ENCODE measurements at regions of chr15 and their contacts with region 1.

Region 1: GRCh38 chr15:92917606-92918407 is 17.7 kb downstream of the CHD2 start:
- DNase-seq: peak; percentile 82 to 95 (median 90)
- ATAC-seq: peak; percentile 26
- H3K4me3 ChIP-seq: no peak overlapping the region
- H3K4me3 Mint-ChIP-seq: peak overlapping the region; percentile 67
- H3K27ac ChIP-seq: peak overlapping the region; percentile 63 to 75
- H3K27ac Mint-ChIP-seq: peak overlapping the region; percentile 99
- H3K4me1 ChIP-seq: peaks cover 77% of the 10 kb centered on the region
- H3K4me1 Mint-ChIP-seq: peaks cover 84% of the 10 kb centered on the region
- H3K27me3 ChIP-seq: no peaks in the 10 kb centered on the region
- H3K27me3 Mint-ChIP-seq: no peaks in the 10 kb centered on the region
- CTCF ChIP-seq: peak; percentile 94

Region 2: DNA sequence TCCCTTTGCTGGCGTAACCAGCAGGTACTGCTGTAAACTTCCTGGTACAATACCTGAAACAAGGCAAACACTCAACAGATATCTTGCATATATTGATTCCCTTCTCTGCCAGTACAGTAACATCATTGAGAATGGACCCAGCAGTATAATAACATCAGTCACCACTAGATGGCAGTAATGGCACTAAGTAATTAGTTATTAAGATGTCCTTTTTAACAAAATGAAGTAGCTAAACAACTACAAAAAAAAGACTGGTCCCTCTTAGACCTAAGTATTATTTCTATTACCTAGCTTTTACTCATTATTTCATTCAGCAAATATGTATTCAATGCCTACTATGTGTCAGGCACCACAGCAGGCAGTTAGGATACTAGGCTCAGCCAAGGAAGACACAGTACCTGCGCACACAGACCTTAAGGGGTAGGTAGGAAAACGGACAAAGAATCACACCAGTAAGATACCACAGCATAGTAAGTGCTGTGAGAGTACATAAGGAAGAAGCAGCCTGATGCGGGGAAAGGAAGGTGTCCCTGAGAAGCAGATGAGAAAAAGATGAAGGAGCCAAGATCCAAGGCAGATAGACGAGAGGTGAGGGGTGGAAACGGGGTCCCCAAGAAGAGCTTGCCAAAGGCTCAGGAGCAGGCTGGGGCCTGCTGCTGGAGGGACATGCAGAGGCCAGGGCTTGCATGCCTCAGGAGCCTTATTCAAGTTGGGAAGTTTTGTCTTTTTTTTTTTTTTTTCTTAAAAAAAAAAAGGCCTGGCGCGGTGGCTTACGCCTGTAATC is 120.4 kb before region 1 on chr15:
- CTCF ChIA-PET with region 1: interaction called, 21 read pairs
- POLR2A ChIA-PET with region 1: interaction called, 16 read pairs
- intact Hi-C with region 1: loop called (anchors 1 kb)
- DNase-seq: peak in 5 of 14 experiments; percentile 26 to 89 (median 83)
- ATAC-seq: peak; percentile 95
- H3K4me3 ChIP-seq: no peak overlapping the region
- H3K4me3 Mint-ChIP-seq: no peak overlapping the region
- H3K27ac ChIP-seq: no peak overlapping the region
- H3K27ac Mint-ChIP-seq: peak overlapping the region; percentile 31
- H3K4me1 ChIP-seq: peaks cover 10% of the 10 kb centered on the region
- H3K4me1 Mint-ChIP-seq: peaks cover 10% of the 10 kb centered on the region
- H3K27me3 ChIP-seq: no peaks in the 10 kb centered on the region
- H3K27me3 Mint-ChIP-seq: no peaks in the 10 kb centered on the region
- CTCF ChIP-seq: peak; percentile 73

Region 3: GRCh38 chr15:92831655-92832328 is 86.0 kb before region 1 on chr15:
- CTCF ChIA-PET with region 1: interaction called, 7 read pairs
- POLR2A ChIA-PET with region 1: interaction called, 14 read pairs
- intact Hi-C with region 1: no loop called
- DNase-seq: peak; percentile 73 to 95 (median 89)
- ATAC-seq: peak; percentile 91
- H3K4me3 ChIP-seq: peak overlapping the region; percentile 33
- H3K4me3 Mint-ChIP-seq: peak overlapping the region; percentile 73
- H3K27ac ChIP-seq: peak overlapping the region; percentile 85 to 96
- H3K27ac Mint-ChIP-seq: peak overlapping the region; percentile 98
- H3K4me1 ChIP-seq: peaks cover 46% of the 10 kb centered on the region
- H3K4me1 Mint-ChIP-seq: peaks cover 57% of the 10 kb centered on the region
- H3K27me3 ChIP-seq: no peaks in the 10 kb centered on the region
- H3K27me3 Mint-ChIP-seq: no peaks in the 10 kb centered on the region
- CTCF ChIP-seq: no peak

Region 4: GRCh38 chr15:92891533-92892200 is 26.1 kb before region 1 on chr15:
- CTCF ChIA-PET with region 1: interaction called, 6 read pairs
- POLR2A ChIA-PET with region 1: interaction called, 17 read pairs
- intact Hi-C with region 1: loop called in 1 of 2 experiments (anchors 1 kb)
- DNase-seq: peak in 1 of 14 experiments; percentile 4
- ATAC-seq: no peak
- H3K4me3 ChIP-seq: no peak overlapping the region
- H3K4me3 Mint-ChIP-seq: peak overlapping the region; percentile 70
- H3K27ac ChIP-seq: peak overlapping the region in 1 of 2 donors; percentile 20
- H3K27ac Mint-ChIP-seq: peak overlapping the region; percentile 99
- H3K4me1 ChIP-seq: peaks cover 35% of the 10 kb centered on the region
- H3K4me1 Mint-ChIP-seq: peaks cover 93% of the 10 kb centered on the region
- H3K27me3 ChIP-seq: no peaks in the 10 kb centered on the region
- H3K27me3 Mint-ChIP-seq: no peaks in the 10 kb centered on the region
- CTCF ChIP-seq: no peak

Region 5: DNA sequence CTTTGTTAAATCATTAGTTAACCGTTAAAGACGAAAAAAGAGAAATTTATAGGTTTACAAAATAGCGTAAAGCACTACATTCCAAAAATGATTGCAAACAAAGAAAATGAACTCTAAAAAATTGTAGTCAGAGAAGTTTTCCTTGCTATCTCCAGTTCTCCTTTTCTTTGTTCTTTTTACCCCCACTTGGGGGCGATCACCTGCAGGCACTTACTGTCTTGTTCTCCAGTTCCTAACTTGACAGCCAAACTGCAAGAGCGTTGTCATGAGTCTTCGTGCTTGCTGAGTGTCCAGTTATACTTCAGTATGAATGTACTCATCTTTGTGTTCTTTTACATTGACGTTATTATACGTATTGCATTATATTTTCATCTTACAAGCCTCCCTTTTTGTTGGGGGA is 36.8 kb after region 1 on chr15:
- CTCF ChIA-PET with region 1: interaction called, 3 read pairs
- POLR2A ChIA-PET with region 1: no interaction called
- intact Hi-C with region 1: loop called (anchors 5 kb)
- DNase-seq: peak in 3 of 14 experiments; percentile 15 to 37 (median 32)
- ATAC-seq: no peak
- H3K4me3 ChIP-seq: no peak overlapping the region
- H3K4me3 Mint-ChIP-seq: no peak overlapping the region
- H3K27ac ChIP-seq: no peak overlapping the region
- H3K27ac Mint-ChIP-seq: no peak overlapping the region
- H3K4me1 ChIP-seq: no peaks in the 10 kb centered on the region
- H3K4me1 Mint-ChIP-seq: peaks cover 41% of the 10 kb centered on the region
- H3K27me3 ChIP-seq: no peaks in the 10 kb centered on the region
- H3K27me3 Mint-ChIP-seq: no peaks in the 10 kb centered on the region
- CTCF ChIP-seq: peak; percentile 26

Measured in CD4-positive, alpha-beta T cell (primary cell).